ENCODE measurements at regions of chr2 and their contacts with region 1.

Region 1: DNA sequence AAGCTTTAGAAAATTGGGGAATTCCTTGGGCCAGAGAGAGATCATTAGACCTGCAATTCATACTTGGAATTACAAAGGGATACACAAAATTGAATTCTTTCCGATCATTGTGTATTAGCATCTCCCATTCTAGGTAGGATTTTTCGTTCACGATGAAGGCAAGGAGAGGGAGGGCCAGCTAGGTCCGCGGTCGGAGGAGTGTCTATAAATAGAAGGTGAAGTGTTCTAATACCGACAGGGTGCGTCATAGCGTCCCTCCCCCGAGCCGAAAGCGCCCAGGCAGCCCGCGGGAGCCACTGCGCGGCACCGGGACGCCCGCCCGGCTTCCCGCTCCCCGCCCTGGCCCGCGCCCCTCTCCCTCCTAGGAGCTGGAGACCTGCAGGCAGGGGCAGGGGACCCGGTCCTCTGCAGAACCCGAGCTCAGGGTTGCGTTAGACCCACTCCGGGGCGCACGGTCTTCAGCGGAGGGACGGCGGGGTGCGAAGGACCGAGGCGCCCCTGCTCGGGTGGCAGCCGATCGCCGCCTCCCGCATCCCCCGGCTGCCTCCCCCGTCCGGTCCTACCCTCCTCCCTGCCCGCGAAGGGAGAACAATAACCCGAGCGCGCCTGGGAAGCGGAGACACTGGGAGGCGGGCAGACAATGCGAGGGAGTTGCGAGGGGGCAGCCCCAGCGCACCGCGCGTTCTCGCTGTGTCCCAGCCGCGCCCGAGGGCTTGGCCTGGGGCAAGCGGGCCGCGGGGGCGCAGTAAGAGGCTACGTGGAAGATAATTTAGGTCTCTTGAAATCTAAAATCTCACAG is 114.2 kb upstream of the SERTAD2 start:
- DNase-seq: peak; percentile 86
- H3K4me3 Mint-ChIP-seq: peak overlapping the region; percentile 62
- H3K27ac Mint-ChIP-seq: peak overlapping the region; percentile 79
- H3K4me1 Mint-ChIP-seq: peaks cover 41% of the 10 kb centered on the region
- H3K27me3 Mint-ChIP-seq: no peaks in the 10 kb centered on the region
- CTCF ChIP-seq: no peak

Region 2: GRCh38 chr2:64750817-64751285 is 17.0 kb before region 1 on chr2:
- CTCF ChIA-PET with region 1: interaction called, 4 read pairs
- intact Hi-C with region 1: loop called (anchors 1 kb)
- DNase-seq: peak; percentile 98
- H3K4me3 Mint-ChIP-seq: peak overlapping the region; percentile 98
- H3K27ac Mint-ChIP-seq: peak overlapping the region; percentile 96
- H3K4me1 Mint-ChIP-seq: peaks cover 26% of the 10 kb centered on the region
- H3K27me3 Mint-ChIP-seq: no peaks in the 10 kb centered on the region
- CTCF ChIP-seq: no peak

Region 3: DNA sequence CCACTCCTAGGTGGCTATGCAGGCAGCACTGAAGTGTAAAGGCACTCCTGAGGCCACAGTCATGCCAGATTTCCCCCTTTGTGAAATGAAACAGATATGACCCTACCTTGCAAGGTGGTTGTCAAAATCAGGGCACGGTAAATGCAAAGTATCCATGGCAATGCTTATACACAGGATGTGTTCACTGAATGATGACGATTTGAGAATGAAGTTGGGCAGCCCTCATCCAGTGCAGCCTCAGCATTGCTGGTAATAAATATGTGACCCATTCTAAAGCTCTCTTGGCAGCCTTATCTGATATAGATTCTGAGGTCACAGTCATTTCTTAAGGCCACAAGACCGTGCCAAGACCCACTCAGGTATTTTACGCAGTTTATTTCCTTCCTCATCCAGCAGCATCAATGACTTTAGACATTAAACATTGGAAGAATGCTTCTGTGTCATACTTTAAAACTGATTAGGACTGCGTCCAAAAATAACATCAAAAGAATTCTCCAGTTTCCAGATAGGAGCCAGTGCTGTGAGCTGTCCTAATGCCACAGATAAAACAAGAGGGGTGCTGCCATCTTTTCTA is 11.3 kb after region 1 on chr2:
- CTCF ChIA-PET with region 1: interaction called, 10 read pairs
- intact Hi-C with region 1: no loop called
- DNase-seq: peak; percentile 61
- H3K4me3 Mint-ChIP-seq: no peak overlapping the region
- H3K27ac Mint-ChIP-seq: peak overlapping the region; percentile 34
- H3K4me1 Mint-ChIP-seq: peaks cover 48% of the 10 kb centered on the region
- H3K27me3 Mint-ChIP-seq: no peaks in the 10 kb centered on the region
- CTCF ChIP-seq: no peak

Region 4: DNA sequence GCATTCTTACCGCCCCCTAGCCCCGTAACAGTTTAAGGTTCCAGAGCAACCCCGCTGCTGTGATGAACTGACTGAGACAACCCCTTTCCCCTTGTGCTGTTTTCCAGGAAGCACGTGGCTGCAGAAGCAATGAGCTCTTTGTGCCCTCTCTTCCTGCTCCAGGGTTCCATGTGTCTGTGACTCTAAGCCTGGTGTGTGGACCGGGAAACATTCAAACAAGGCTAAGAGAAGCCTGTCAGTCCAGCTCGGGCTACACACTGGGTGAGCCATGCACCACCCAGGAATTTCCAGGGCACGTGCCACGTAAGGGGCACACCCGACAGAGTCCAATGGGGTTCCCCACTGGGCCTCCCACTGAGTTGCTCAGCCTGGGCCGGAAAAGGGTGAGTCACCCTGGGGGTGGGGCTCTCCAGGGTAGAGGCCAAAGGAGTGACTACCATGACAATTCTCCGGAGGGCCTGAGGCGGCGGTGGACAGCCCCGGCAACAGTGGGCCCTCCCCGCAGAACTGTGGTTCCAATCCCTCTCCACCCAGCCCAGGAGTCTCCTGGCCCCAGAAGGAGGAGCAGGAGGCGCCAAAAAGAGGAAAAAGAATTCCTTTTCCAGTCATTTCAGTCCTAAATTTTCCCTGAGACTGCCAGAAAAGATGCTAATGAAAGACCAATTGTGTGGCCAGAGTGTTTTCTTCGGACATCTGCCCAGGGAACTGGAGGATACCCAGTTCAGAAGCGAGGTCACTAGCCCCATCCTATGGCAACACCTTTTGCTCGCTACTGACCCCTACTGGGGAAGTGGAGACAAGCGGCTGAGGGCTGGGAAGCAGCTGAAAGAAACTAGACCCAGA is 63.5 kb after region 1 on chr2:
- CTCF ChIA-PET with region 1: interaction called, 3 read pairs
- intact Hi-C with region 1: loop called (anchors 5 kb)
- DNase-seq: peak; percentile 99
- H3K4me3 Mint-ChIP-seq: peak overlapping the region; percentile 48
- H3K27ac Mint-ChIP-seq: peak overlapping the region; percentile 97
- H3K4me1 Mint-ChIP-seq: peaks cover 52% of the 10 kb centered on the region
- H3K27me3 Mint-ChIP-seq: no peaks in the 10 kb centered on the region
- CTCF ChIP-seq: peak; percentile 90

Region 5: DNA sequence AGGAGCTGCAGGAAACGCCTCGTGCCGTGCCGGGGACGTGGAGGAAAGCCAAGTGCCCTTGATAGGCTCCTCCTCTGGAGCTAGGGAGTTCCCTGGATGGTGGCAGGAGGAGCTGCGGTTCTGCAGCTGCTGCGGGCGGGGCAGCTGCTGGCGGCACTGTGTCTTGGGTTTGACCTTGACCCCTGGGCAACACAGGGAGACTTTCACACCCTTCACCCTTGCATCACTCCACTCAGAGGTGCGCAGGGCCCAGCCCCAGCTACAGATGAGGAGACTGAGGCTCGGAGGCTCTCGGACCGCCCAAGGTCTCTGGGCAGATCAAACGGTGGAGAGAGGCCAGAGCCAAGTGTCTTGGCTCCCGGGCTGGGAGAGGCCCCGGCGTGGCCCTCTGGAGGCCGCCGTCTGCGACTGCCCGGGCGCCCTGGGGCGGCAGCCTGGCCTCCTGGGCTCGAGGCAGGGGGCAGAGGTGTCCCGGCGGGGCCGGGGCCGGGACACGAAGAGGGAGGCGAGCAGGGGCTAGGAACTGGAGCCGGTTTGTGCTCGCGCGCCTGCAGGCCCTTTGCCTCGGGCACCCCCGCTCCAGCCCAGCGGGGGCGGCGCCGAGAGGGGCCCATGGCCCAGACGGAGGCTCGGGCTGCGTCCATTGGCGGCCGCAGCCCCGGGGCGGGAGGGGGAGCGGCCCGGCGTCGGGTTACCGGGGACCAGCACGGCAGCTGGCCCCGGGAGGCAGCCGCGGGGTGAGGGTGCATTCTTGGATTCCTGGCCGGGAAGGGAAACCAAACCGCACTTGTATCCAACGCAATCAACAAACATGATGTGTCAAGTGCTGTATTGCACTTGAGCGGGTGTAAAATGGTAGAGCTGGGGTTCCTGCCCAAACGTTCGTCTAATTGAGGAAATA is 91.7 kb after region 1 on chr2:
- CTCF ChIA-PET with region 1: no interaction called
- intact Hi-C with region 1: loop called (anchors 1 kb)
- DNase-seq: peak; percentile 74
- H3K4me3 Mint-ChIP-seq: peak overlapping the region; percentile 66
- H3K27ac Mint-ChIP-seq: peak overlapping the region; percentile 24
- H3K4me1 Mint-ChIP-seq: peaks cover 10% of the 10 kb centered on the region
- H3K27me3 Mint-ChIP-seq: no peaks in the 10 kb centered on the region
- CTCF ChIP-seq: no peak

Region 6: GRCh38 chr2:64865073-64865830 is 97.4 kb after region 1 on chr2:
- CTCF ChIA-PET with region 1: no interaction called
- intact Hi-C with region 1: loop called (anchors 2 kb)
- DNase-seq: peak; percentile 63
- H3K4me3 Mint-ChIP-seq: peak overlapping the region; percentile 49
- H3K27ac Mint-ChIP-seq: no peak overlapping the region
- H3K4me1 Mint-ChIP-seq: peaks cover 10% of the 10 kb centered on the region
- H3K27me3 Mint-ChIP-seq: no peaks in the 10 kb centered on the region
- CTCF ChIP-seq: peak; percentile 87